AG04450 (cell line): ENCODE measurements at regions of chr2 and their contacts with region 1.

Region 1: GRCh38 chr2:190835303-190835930 is 45.2 kb upstream of the GLS start:
- DNase-seq: peak; percentile 77
- H3K4me3 ChIP-seq: no peak overlapping the region
- H3K27ac ChIP-seq: no peak overlapping the region
- H3K27me3 ChIP-seq: no peaks in the 10 kb centered on the region
- CTCF ChIP-seq: no peak

Region 2: DNA sequence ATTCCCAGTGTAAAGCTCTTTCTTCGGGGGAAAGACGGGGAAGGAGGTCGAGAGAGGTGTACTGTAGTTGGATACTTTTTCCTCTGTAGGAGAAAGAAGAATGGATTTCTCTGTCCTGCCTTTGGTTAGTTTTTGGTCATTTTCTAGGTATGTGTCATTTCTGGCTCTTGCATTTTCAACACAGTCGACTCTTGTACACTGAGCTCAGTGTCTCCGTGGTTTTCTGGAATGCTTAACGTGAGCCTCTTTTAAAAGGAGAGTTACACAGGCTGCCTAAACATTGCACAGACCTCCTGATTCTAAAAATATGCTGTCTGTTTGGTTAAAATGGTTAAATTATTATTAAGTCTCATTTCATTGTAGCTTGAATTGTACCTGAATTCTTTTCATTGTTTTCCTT is 23.4 kb after region 1 on chr2:
- CTCF ChIA-PET with region 1: no interaction called
- POLR2A ChIA-PET with region 1: interaction called, 13 read pairs
- DNase-seq: no peak
- H3K4me3 ChIP-seq: peak overlapping the region; percentile 7
- H3K27ac ChIP-seq: peak overlapping the region; percentile 68
- H3K27me3 ChIP-seq: no peaks in the 10 kb centered on the region
- CTCF ChIP-seq: no peak